ENCODE measurements at regions of chr11 and their contacts with region 1.

Region 1: DNA sequence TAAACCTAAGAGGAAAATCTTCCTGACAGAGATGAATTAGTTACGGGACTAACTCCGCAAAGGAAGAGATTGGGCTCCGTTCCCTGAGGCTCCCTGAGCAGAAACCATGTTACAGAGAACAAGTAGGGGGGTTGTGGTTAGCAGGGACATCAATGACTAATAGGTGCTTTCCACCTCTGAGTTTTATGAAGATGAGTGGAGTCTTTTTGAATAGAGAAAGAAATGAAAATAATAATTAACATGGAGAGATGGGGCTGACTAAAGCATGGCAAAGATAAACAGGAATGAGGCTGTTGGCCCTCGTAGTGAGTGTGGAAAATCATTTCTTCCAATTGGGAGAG is 47.5 kb upstream of the PICALM start:
- DNase-seq: peak; percentile 23
- H3K4me3 Mint-ChIP-seq: peak overlapping the region; percentile 57
- H3K27ac Mint-ChIP-seq: peak overlapping the region; percentile 98
- H3K4me1 Mint-ChIP-seq: peaks cover 56% of the 10 kb centered on the region
- H3K27me3 Mint-ChIP-seq: no peaks in the 10 kb centered on the region
- CTCF ChIP-seq: no peak

Region 2: GRCh38 chr11:86047275-86047991 is 68.9 kb before region 1 on chr11:
- CTCF ChIA-PET with region 1: no interaction called
- intact Hi-C with region 1: loop called (anchors 5 kb)
- DNase-seq: no peak
- H3K4me3 Mint-ChIP-seq: peak overlapping the region; percentile 49
- H3K27ac Mint-ChIP-seq: peak overlapping the region; percentile 48
- H3K4me1 Mint-ChIP-seq: peaks cover 39% of the 10 kb centered on the region
- H3K27me3 Mint-ChIP-seq: no peaks in the 10 kb centered on the region
- CTCF ChIP-seq: no peak

Region 3: GRCh38 chr11:86193297-86194095 is 77.1 kb after region 1 on chr11:
- CTCF ChIA-PET with region 1: interaction called, 19 read pairs
- intact Hi-C with region 1: loop called (anchors 5 kb)
- DNase-seq: peak; percentile 67
- H3K4me3 Mint-ChIP-seq: peak overlapping the region; percentile 27
- H3K27ac Mint-ChIP-seq: peak overlapping the region; percentile 92
- H3K4me1 Mint-ChIP-seq: peaks cover 27% of the 10 kb centered on the region
- H3K27me3 Mint-ChIP-seq: no peaks in the 10 kb centered on the region
- CTCF ChIP-seq: peak; percentile 27

Measured in Calu3 (cell line).